CD8-positive, alpha-beta memory T cell (primary cell): ENCODE measurements at regions of chr14 and their contacts with region 1.

Region 1: GRCh38 chr14:50762001-50762930 is 68.7 kb downstream of the NIN start:
- DNase-seq: no peak
- H3K4me3 ChIP-seq: no peak overlapping the region
- H3K4me3 Mint-ChIP-seq: no peak overlapping the region
- H3K27ac ChIP-seq: no peak overlapping the region
- H3K27ac Mint-ChIP-seq: peak overlapping the region in 5 of 8 donors; percentile 7 to 78 (median 24)
- H3K4me1 ChIP-seq: no peaks in the 10 kb centered on the region
- H3K4me1 Mint-ChIP-seq: no peaks in the 10 kb centered on the region
- H3K27me3 ChIP-seq: no peaks in the 10 kb centered on the region
- H3K27me3 Mint-ChIP-seq: no peaks in the 10 kb centered on the region

Region 2: DNA sequence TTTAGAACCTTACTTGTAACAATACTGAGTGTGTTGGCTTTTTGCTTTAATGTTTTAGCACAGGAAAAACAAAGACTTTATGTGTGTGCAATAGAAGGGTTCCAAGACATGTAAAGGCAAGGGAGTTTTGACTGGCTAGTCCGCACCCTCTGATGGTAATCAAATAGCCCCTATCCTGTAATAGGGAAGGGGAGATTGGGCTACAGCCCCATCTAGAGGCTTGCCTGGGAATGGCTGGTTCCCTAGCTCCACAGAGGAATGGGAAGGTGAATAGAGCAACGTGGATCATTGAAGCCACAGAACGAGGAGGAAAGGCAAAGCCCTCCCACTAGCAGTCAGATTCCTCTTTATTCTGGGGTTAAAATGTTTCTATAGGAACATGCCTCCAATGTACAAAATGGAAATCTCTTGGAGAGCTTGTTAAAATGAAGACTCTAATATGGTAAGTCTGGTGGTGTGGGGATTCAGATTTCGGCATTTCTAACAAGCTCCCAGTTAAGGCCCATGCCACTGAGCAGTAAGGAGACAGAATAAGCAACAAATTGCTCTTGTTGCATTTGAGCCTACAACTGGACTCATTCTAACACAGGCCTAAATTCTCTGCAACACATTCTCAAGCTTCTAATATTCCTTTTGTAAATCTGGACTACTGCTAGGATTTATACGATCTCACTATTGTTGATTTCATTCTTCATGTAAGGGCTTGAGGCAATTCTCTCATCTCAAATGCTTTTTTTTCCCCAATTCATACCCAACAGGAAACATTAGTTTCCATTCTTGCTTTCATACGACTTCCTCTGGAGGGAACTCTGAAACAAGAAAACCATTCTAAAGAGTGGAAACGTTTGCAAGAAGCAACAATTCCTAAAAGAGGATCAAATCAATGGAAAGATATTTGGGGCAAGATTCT is 11.6 kb after region 1 on chr14:
- CTCF ChIA-PET with region 1: interaction called, 44 read pairs
- POLR2A ChIA-PET with region 1: interaction called, 3 read pairs
- DNase-seq: no peak
- H3K4me3 ChIP-seq: no peak overlapping the region
- H3K4me3 Mint-ChIP-seq: no peak overlapping the region
- H3K27ac ChIP-seq: no peak overlapping the region
- H3K27ac Mint-ChIP-seq: peak overlapping the region in 7 of 8 donors; percentile 33 to 82 (median 70)
- H3K4me1 ChIP-seq: peaks cover 21% of the 10 kb centered on the region
- H3K4me1 Mint-ChIP-seq: peaks cover 17 to 38% (median 27%) of the 10 kb centered on the region in 3 donors
- H3K27me3 ChIP-seq: no peaks in the 10 kb centered on the region
- H3K27me3 Mint-ChIP-seq: no peaks in the 10 kb centered on the region

Region 3: DNA sequence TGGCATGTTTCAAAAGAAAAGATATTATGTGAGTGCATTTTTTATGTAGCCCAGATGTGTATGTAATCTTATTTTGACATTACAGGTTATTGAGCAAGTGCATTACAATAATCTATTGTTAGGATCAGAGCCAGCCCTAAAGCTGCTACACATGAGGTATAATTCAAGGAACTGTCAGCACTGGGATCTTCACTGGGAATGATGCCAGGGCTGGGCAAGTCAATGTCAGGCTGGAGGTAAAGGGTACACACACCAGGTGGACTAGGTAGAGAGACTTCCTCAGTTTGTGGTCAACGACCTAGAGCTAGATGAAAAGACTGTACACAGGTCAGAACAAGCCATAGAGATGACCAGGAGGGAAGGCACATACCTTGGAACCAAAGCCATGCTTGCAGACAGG is 317.2 kb after region 1 on chr14:
- CTCF ChIA-PET with region 1: no interaction called
- POLR2A ChIA-PET with region 1: no interaction called
- DNase-seq: no peak
- H3K4me3 ChIP-seq: no peak overlapping the region
- H3K4me3 Mint-ChIP-seq: no peak overlapping the region
- H3K27ac ChIP-seq: no peak overlapping the region
- H3K27ac Mint-ChIP-seq: no peak overlapping the region
- H3K4me1 ChIP-seq: no peaks in the 10 kb centered on the region
- H3K4me1 Mint-ChIP-seq: no peaks in the 10 kb centered on the region
- H3K27me3 ChIP-seq: no peaks in the 10 kb centered on the region
- H3K27me3 Mint-ChIP-seq: peaks cover 6 to 42% of the 10 kb centered on the region in 2 donors